ENCODE measurements at regions of chr14 and their contacts with region 1.

Region 1: GRCh38 chr14:93655078-93655750 is 133.1 kb downstream of the PRIMA1 start:
- DNase-seq: peak in 1 of 3 donors; percentile 52
- ATAC-seq: no peak
- H3K4me3 ChIP-seq: no peak overlapping the region
- H3K4me1 ChIP-seq: no peaks in the 10 kb centered on the region
- CTCF ChIP-seq: no peak

Region 2: GRCh38 chr14:93543766-93544165 is 111.4 kb before region 1 on chr14:
- intact Hi-C with region 1: no loop called
- DNase-seq: no peak
- ATAC-seq: no peak
- H3K4me3 ChIP-seq: no peak overlapping the region
- H3K4me1 ChIP-seq: no peaks in the 10 kb centered on the region
- CTCF ChIP-seq: no peak

Region 3: GRCh38 chr14:93789228-93790130 is 134.3 kb after region 1 on chr14:
- intact Hi-C with region 1: loop called in 1 of 2 experiments (anchors 5 kb)
- DNase-seq: no peak
- ATAC-seq: no peak
- H3K4me3 ChIP-seq: no peak overlapping the region
- H3K4me1 ChIP-seq: peaks cover 2% of the 10 kb centered on the region
- CTCF ChIP-seq: no peak

Region 4: GRCh38 chr14:93892923-93893558 is 237.8 kb after region 1 on chr14:
- intact Hi-C with region 1: loop called in 1 of 2 experiments (anchors 10 kb)
- DNase-seq: peak; percentile 59 to 84 (median 79)
- ATAC-seq: peak; percentile 72
- H3K4me3 ChIP-seq: no peak overlapping the region
- H3K4me1 ChIP-seq: no peaks in the 10 kb centered on the region
- CTCF ChIP-seq: peak; percentile 99

Region 5: GRCh38 chr14:93906341-93907329 is 251.4 kb after region 1 on chr14:
- intact Hi-C with region 1: loop called in 1 of 2 experiments (anchors 5 kb)
- DNase-seq: peak in 2 of 3 donors; percentile 66 to 75
- ATAC-seq: peak; percentile 78
- H3K4me3 ChIP-seq: no peak overlapping the region
- H3K4me1 ChIP-seq: no peaks in the 10 kb centered on the region
- CTCF ChIP-seq: peak; percentile 63

Region 6: GRCh38 chr14:93939304-93940229 is 284.4 kb after region 1 on chr14:
- intact Hi-C with region 1: no loop called
- DNase-seq: peak; percentile 85 to 89 (median 89)
- ATAC-seq: peak; percentile 93
- H3K4me3 ChIP-seq: no peak overlapping the region
- H3K4me1 ChIP-seq: no peaks in the 10 kb centered on the region
- CTCF ChIP-seq: peak; percentile 67